ENCODE measurements at regions of chr7 and their contacts with region 1.

Region 1: DNA sequence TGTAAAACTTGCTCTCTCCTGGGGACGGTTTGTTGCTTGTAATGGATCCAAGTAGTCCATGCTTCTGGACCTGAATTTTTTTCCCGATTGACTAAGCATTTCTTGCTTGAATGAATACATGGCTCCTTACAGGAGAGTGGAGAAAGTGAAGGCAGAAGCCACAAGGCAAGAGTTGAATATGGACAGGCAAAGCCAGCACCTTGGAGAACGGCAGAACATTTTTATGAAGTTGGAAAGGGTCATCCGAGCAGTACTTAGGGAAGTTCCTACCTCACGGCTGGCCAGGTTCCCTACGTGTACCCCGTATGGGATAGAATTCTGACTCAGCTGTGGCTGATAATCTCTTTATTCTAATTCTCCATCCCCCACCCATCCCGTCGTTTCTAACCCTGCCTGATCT is 50.6 kb upstream of the MGAM2 start:
- DNase-seq: no peak

Region 2: GRCh38 chr7:142088022-142088714 is 27.2 kb after region 1 on chr7:
- intact Hi-C with region 1: loop called (anchors 1 kb)
- DNase-seq: peak in 31 of 42 donors; percentile 6 to 79 (median 42)

Region 3: GRCh38 chr7:142697270-142697669 is 636.3 kb after region 1 on chr7:
- intact Hi-C with region 1: no loop called
- DNase-seq: no peak

Measured in head of caudate nucleus (tissue), 42 donors.